ENCODE measurements at regions of chr12 and their contacts with region 1.

Region 1: DNA sequence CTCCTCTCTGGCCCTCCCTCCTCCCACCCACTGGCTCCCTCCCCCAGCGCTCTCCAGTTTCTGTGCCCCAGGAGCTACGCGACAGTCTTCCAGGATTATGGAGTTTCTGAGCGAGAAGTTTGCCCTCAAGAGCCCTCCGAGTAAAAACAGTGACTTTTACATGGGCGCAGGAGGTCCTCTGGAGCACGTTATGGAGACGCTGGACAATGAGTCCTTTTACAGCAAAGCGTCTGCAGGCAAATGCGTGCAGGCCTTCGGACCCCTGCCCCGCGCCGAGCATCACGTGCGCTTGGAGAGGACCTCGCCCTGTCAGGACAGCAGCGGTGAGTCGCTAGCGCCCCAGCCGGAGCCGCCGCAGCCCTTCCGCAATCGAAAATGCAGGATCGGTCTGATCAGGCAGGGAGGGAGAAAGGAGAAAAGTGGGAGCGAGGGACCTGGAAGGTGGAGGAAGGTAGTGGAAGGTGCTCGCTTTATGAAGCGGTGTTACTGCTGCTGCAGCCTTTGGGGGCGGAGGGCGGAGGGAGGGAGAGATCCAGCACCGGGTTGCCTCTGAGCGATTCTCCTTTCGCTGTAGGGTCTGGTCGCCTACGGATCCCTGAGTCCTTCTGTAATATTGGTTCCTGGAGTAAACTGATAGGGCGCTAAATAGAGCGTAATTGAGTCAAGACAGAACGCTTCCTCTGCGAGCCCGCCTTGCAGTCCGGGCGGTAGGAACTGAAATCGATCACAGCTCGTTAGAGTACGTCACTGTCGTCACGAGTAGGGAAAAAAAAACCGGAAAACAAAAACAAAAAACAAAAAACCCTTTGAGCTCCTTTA is at the start of gene ALX1:
- DNase-seq: peak; percentile 84
- H3K4me3 ChIP-seq: peak within 1 kb of the TSS; percentile 60
- H3K27ac ChIP-seq: peak within 1 kb of the TSS; percentile 78
- H3K4me1 ChIP-seq: peaks cover 18% of the 10 kb centered on the region
- H3K27me3 ChIP-seq: no peaks in the 10 kb centered on the region
- CTCF ChIP-seq: peak; percentile 26; the same call in 1 of the 2 replicates
- total RNA-seq, gene ALX1: 10.0 and 11.0 TPM in 2 replicates

Region 2: GRCh38 chr12:85356596-85357385 is 76.4 kb after region 1 on chr12:
- CTCF ChIA-PET with region 1: no interaction called
- POLR2A ChIA-PET with region 1: interaction called, 3 read pairs
- intact Hi-C with region 1: loop called (anchors 2 kb)
- DNase-seq: peak; percentile 89
- H3K4me3 ChIP-seq: no peak overlapping the region
- H3K27ac ChIP-seq: peak overlapping the region; percentile 81
- H3K4me1 ChIP-seq: peaks cover 74% of the 10 kb centered on the region
- H3K27me3 ChIP-seq: no peaks in the 10 kb centered on the region
- CTCF ChIP-seq: no peak

Region 3: GRCh38 chr12:85440271-85440670 is 159.9 kb after region 1 on chr12:
- CTCF ChIA-PET with region 1: no interaction called
- POLR2A ChIA-PET with region 1: interaction called, 11 read pairs
- intact Hi-C with region 1: no loop called
- DNase-seq: no peak
- H3K4me3 ChIP-seq: no peak overlapping the region
- H3K27ac ChIP-seq: no peak overlapping the region
- H3K4me1 ChIP-seq: peaks cover 7% of the 10 kb centered on the region
- H3K27me3 ChIP-seq: no peaks in the 10 kb centered on the region
- CTCF ChIP-seq: no peak

Measured in A673 (cell line).